Right cardiac atrium (tissue), 5 donors: ENCODE measurements at regions of chr1 and their contacts with region 1.

Region 1: GRCh38 chr1:35564037-35564883 is 6.7 kb downstream of the NCDN start:
- DNase-seq: peak; percentile 76 to 91 (median 86)
- ATAC-seq: peak; percentile 35 to 49
- H3K4me3 ChIP-seq: no peak overlapping the region
- H3K27ac ChIP-seq: no peak overlapping the region
- H3K4me1 ChIP-seq: no peaks in the 10 kb centered on the region
- H3K27me3 ChIP-seq: no peaks in the 10 kb centered on the region

Region 2: DNA sequence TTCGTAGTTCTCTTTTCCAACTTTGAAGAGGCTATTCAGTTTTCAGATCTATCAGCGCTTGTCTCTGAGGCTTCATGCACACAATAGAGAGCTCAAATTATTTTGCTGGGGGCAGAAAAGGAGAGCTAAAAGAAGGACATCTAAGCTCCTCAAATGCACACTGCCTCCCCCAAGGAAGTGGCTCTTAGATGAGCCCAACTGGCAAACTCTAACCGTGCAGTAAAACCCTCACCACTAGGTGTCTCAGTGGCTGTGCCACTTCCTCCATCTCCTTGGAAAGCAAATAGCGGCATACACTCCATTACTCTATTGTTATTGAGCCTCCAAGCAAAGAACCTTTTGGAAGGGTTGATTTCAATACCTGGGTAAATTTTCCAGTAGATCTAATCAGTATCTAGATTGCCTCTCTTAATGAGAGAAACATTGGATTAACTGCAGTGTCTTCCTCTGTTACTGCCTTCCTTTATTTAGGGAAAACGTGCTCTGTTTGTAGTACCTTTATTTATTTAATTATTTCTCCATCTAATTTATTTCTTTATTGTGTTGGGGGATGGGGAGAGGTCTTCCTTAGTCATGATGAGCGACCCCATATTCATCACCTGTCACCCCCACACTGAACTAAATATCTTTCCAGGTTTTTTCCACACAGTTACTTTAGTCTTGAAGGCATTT is 362.1 kb before region 1 on chr1:
- intact Hi-C with region 1: loop called in 1 of 4 experiments (anchors 10 kb)
- DNase-seq: peak in 2 of 3 donors; percentile 58 to 75
- ATAC-seq: peak; percentile 96 to 97
- H3K4me3 ChIP-seq: no peak overlapping the region
- H3K27ac ChIP-seq: no peak overlapping the region
- H3K4me1 ChIP-seq: no peaks in the 10 kb centered on the region
- H3K27me3 ChIP-seq: no peaks in the 10 kb centered on the region

Region 3: GRCh38 chr1:35451125-35451528 is 113.1 kb before region 1 on chr1:
- intact Hi-C with region 1: loop called (anchors 2 to 5 kb)
- DNase-seq: peak; percentile 84 to 95 (median 92)
- ATAC-seq: peak; percentile 85 to 89
- H3K4me3 ChIP-seq: no peak overlapping the region
- H3K27ac ChIP-seq: no peak overlapping the region
- H3K4me1 ChIP-seq: peaks cover 10% of the 10 kb centered on the region
- H3K27me3 ChIP-seq: no peaks in the 10 kb centered on the region

Region 4: DNA sequence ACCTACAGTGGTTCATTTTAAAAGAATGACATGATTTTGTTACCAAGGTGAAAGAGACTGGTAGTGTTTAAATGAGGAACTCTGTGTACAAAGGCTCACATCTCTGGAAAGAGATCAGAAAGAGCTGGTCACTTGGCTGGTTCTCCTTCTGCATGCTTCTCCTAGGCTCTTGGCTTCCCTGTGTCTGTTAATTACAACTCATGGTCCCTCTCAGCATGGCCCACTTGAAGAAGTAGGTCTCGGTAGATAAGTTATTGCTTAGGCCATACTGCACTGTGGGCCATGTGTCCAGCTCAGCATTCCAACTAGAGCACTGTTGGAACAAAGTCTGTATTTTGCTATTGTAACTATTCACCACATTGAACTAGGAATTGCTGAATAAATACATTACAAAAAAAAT is 98.1 kb before region 1 on chr1:
- intact Hi-C with region 1: loop called in 1 of 4 experiments (anchors 5 kb)
- DNase-seq: no peak
- ATAC-seq: peak in 1 of 2 donors; percentile 36
- H3K4me3 ChIP-seq: no peak overlapping the region
- H3K27ac ChIP-seq: no peak overlapping the region
- H3K4me1 ChIP-seq: no peaks in the 10 kb centered on the region
- H3K27me3 ChIP-seq: no peaks in the 10 kb centered on the region

Region 5: DNA sequence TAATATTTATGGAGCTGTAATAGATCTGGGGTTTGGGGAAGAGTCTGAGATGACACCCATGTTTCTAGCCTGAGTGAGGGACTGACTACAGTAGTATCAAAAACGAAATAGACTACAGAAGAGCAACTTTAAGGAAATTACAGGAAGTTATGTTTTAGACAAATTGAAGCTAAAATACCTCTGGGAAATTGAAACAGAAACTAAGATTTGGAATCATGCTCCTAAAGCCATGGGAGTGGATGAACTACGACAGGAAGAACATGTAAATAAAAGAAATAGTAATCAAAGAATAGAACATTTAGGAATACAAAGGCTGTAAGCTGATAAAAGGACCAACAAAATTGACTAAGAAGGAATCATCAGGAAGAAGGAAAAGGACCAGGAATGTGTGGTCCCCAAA is 75.9 kb before region 1 on chr1:
- intact Hi-C with region 1: no loop called
- DNase-seq: no peak
- ATAC-seq: no peak
- H3K4me3 ChIP-seq: peak overlapping the region; percentile 26
- H3K27ac ChIP-seq: no peak overlapping the region
- H3K4me1 ChIP-seq: no peaks in the 10 kb centered on the region
- H3K27me3 ChIP-seq: no peaks in the 10 kb centered on the region

Region 6: GRCh38 chr1:35726450-35727433 is 162.5 kb after region 1 on chr1:
- intact Hi-C with region 1: loop called in 1 of 4 experiments (anchors 5 kb)
- DNase-seq: peak in 2 of 3 donors; percentile 50 to 69
- ATAC-seq: peak; percentile 83 to 90
- H3K4me3 ChIP-seq: no peak overlapping the region
- H3K27ac ChIP-seq: no peak overlapping the region
- H3K4me1 ChIP-seq: no peaks in the 10 kb centered on the region
- H3K27me3 ChIP-seq: no peaks in the 10 kb centered on the region

Region 7: GRCh38 chr1:35769759-35770446 is 205.6 kb after region 1 on chr1 and contains the start of gene CLSPN:
- intact Hi-C with region 1: loop called in 2 of 4 experiments (anchors 5 kb)
- DNase-seq: peak; percentile 96 to 98 (median 97)
- ATAC-seq: peak; percentile 99
- H3K4me3 ChIP-seq: peak within 1 kb of the TSS; percentile 80
- H3K27ac ChIP-seq: peak within 1 kb of the TSS; percentile 95
- H3K4me1 ChIP-seq: no peaks in the 10 kb centered on the region
- H3K27me3 ChIP-seq: no peaks in the 10 kb centered on the region
- total RNA-seq, gene CLSPN: 0.22 to 1.8 (median 0.44) TPM

Region 8: DNA sequence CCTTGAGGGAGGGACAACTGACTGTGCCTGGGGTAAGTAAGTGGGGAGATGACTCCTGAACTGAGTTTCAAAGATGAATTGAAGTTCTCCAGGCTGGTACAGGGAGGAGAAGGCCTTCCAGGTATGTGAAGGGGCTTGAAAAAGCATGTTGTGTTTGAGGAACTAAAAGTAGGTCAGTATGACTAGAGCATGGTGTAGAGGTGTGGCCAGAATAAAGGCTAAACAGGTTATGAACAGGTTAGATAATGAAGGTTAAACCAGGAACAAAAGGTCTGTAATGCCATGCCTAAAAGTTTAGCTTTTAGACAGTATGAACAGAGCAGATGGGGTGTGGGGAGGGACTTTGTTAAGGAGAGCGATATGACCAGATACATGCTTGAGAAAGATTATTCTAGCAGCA is 212.8 kb after region 1 on chr1:
- intact Hi-C with region 1: loop called in 2 of 4 experiments (anchors 5 kb)
- DNase-seq: no peak
- ATAC-seq: no peak
- H3K4me3 ChIP-seq: no peak overlapping the region
- H3K27ac ChIP-seq: no peak overlapping the region
- H3K4me1 ChIP-seq: no peaks in the 10 kb centered on the region
- H3K27me3 ChIP-seq: no peaks in the 10 kb centered on the region

Region 9: DNA sequence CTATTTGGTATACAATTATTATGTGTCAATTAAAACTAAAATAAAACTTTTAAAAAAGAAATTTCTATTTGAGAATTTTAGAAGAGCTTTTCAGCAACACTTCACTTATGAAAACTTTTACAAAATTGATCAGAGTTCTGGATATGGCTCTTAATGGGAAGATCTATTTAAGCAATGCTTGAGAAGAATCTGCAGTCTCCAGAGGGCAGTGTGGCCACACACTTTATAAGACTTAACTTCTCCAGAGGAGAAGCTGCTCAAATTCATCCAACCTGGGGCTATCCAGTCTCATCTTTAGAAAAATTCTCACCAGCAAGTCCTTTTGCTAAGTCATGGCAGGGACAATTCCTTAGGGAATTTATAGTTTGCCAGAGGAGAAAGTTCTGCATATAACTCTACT is 293.6 kb after region 1 on chr1:
- intact Hi-C with region 1: no loop called
- DNase-seq: no peak
- ATAC-seq: no peak
- H3K4me3 ChIP-seq: no peak overlapping the region
- H3K27ac ChIP-seq: no peak overlapping the region
- H3K4me1 ChIP-seq: no peaks in the 10 kb centered on the region
- H3K27me3 ChIP-seq: no peaks in the 10 kb centered on the region